ENCODE measurements at regions of chrX and their contacts with region 1.

Region 1: DNA sequence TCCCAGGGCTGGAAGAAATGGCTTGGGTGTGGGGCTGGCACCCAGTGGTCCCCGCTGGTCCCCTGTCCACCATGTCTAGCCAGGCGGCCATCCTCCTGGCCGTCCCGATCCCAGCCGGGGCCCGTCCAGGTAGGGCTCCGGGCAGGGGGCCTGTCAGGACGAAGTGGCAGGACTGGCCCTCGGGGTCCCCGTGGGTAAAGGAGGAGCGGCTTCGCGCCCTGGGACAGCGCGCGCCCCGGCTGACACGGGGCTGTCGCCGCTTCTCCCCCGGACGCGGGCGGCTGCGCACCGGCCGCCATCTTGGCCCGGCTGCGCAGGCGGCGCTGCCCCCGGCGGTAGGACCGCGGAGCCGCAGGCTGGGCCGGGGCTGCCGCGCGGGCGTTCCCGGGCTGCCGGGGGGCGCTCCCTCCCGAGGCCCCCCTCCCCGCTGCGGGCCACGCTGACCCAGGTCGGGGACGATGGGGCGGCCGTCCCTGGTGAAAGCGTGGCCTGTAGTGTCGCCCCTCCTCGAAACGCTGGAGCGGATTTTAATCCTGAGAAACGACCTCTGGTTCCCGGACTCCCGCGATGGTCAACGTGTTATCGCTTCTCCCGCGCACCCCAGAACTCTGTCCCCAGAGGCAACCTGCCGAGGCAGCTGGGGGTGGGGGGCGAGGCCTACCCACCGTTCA is 60.4 kb upstream of the BCOR start:
- DNase-seq: no peak
- ATAC-seq: peak; percentile 41

Region 2: DNA sequence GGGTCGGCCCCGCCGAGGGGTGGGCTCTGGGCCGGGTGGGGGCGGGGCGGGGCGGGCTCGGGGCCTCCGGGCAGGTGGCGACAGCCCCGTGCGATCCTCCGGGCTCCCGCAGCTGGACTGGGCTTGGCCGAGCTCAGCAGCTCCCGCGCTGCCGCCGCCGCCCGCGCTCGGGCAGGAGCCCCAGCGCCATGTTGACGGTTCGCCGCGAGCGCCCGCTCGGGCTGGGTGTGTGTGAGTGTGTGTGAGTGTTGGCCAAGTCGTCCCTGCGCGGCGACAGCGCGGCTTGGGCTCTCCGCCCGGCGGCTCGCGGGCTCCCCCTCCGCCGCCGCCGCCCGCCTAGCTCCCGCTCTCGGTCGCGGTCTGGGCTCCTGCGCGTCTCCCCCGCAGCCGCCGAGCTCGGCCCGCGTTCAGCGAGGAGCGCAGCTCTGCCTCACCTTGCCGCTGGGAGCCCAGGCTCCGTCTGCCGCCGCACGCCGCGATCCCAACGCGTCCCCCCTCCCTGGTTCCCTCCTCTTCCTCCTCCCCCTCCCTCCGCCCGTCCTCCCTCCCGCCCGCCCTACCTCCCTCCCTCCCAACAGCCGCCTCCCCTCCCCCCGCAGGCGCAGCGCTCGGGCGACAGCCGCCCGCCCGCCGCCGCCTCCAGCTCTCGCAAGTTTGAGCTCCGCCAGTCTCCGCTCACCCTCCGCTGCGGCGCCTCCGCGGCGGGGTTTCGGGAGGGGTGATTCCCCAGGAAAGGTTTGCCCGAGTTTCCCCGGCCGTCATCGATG is 60.5 kb before region 1 on chrX and contains the start of gene BCOR:
- intact Hi-C with region 1: loop called (anchors 5 kb)
- DNase-seq: peak; percentile 86
- ATAC-seq: peak; percentile 46
- total RNA-seq, gene BCOR: 42.0 TPM

Measured in sciatic nerve (tissue), 2 donors.